ENCODE measurements at regions of chr15 and their contacts with region 1.

Region 1: DNA sequence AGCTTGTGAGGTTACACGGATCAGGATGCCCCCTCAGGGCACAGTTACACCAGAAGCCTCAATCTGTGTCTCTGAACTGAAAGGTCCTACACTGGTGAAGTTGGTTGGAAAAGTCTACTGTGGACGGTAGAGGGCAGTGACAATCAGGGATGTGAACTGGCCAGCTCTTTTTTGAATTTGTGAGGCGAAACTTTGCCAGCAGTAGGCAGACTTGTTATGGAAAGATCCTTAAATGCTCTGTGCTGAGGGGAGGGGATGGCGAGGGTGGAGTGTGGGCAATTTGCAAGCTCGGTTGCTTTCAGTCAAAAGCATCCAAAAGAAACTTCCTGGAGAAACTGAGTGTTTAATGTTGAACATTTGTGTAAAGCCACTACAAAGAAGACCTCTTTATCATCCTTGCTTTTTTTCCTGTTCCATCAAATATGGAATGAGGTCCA is 127.4 kb upstream of the ABHD17C start:
- DNase-seq: peak; percentile 78 to 85 (median 80)
- H3K4me3 ChIP-seq: no peak overlapping the region
- H3K27ac ChIP-seq: no peak overlapping the region
- H3K4me1 ChIP-seq: peaks cover 0 to 7% (median 6%) of the 10 kb centered on the region in 4 experiments
- H3K27me3 ChIP-seq: peaks cover 0 to 2% (median 0%) of the 10 kb centered on the region in 5 experiments

Region 2: GRCh38 chr15:80455668-80456442 is 111.9 kb before region 1 on chr15:
- CTCF ChIA-PET with region 1: interaction called, 15 read pairs
- POLR2A ChIA-PET with region 1: no interaction called
- DNase-seq: peak; percentile 72 to 88 (median 83)
- H3K4me3 ChIP-seq: no peak overlapping the region
- H3K27ac ChIP-seq: no peak overlapping the region
- H3K4me1 ChIP-seq: no peaks in the 10 kb centered on the region
- H3K27me3 ChIP-seq: peaks cover 0 to 6% (median 2%) of the 10 kb centered on the region in 5 experiments

Region 3: GRCh38 chr15:80613772-80614365 is 46.1 kb after region 1 on chr15:
- CTCF ChIA-PET with region 1: interaction called, 10 read pairs
- POLR2A ChIA-PET with region 1: no interaction called
- DNase-seq: no peak
- H3K4me3 ChIP-seq: no peak overlapping the region
- H3K27ac ChIP-seq: no peak overlapping the region
- H3K4me1 ChIP-seq: peaks cover 0 to 3% (median under 1%) of the 10 kb centered on the region in 4 experiments
- H3K27me3 ChIP-seq: peaks cover 0 to 17% (median 4%) of the 10 kb centered on the region in 5 experiments

Region 4: DNA sequence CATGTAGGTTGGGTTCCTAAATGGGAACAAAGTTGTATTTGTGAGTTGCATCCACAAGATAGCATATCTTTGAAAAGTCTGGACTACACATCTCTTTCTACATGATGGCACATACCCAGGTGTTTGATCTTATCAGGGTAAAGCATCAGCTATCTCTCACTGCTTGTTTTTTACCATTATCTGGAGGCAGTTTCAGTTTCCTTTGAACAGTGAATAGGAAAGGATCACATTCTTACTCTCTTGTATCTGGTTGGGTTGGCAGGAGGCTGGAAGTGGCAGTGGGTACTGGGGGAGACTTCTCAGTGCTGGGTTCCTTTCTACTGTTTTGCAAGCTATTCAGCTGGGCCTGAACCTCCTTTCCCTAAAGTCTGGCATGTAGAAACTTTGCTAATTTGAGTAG is 215.5 kb after region 1 on chr15:
- CTCF ChIA-PET with region 1: interaction called, 57 read pairs
- POLR2A ChIA-PET with region 1: interaction called, 4 read pairs
- DNase-seq: no peak
- H3K4me3 ChIP-seq: no peak overlapping the region
- H3K27ac ChIP-seq: no peak overlapping the region
- H3K4me1 ChIP-seq: peaks cover 1 to 25% (median 20%) of the 10 kb centered on the region in 4 experiments
- H3K27me3 ChIP-seq: peaks cover 0 to 53% (median 43%) of the 10 kb centered on the region in 5 experiments

Region 5: GRCh38 chr15:80970018-80970658 is 402.4 kb after region 1 on chr15:
- CTCF ChIA-PET with region 1: interaction called, 35 read pairs
- POLR2A ChIA-PET with region 1: no interaction called
- DNase-seq: peak; percentile 51 to 80 (median 71)
- H3K4me3 ChIP-seq: no peak overlapping the region
- H3K27ac ChIP-seq: no peak overlapping the region
- H3K4me1 ChIP-seq: no peaks in the 10 kb centered on the region
- H3K27me3 ChIP-seq: no peaks in the 10 kb centered on the region

Measured in common myeloid progenitor, CD34-positive (primary cell).